CD4-positive, alpha-beta memory T cell (primary cell): ENCODE measurements at regions of chr12 and their contacts with region 1.

Region 1: DNA sequence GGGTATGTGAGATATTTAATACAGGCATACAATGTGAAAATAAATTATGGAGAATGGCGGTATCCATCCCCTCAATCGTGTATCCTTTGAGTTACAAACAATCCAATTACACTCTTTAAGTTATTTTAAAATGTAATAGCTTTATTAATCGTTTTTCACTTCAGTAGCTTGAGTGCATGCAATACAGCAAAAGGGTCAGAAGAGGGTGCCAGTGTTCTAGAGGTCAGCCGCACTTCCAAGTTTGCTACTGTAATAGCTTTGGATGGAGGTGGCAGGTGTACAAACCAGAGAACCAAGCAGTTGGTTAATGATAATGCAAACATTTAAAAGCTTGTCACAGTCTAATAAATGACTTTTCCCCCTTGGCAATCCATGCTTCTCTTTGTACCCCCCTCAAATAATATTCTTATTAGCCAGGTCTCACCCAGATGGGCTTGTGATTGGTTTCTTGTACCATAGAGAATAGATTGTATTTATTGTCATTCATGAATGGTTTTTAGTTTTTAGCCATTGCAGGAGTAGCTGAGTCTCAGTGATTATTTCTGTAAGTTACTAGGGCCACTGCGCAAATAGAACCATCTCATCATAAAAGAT is 127.0 kb downstream of the ERC1 start:
- DNase-seq: peak; percentile 66 to 72 (median 68)
- H3K4me3 ChIP-seq: no peak overlapping the region
- H3K4me3 Mint-ChIP-seq: no peak overlapping the region
- H3K27ac ChIP-seq: no peak overlapping the region
- H3K27ac Mint-ChIP-seq: no peak overlapping the region
- H3K4me1 ChIP-seq: peaks cover 8% of the 10 kb centered on the region
- H3K4me1 Mint-ChIP-seq: peaks cover 5 to 18% (median 10%) of the 10 kb centered on the region in 4 donors
- H3K27me3 ChIP-seq: no peaks in the 10 kb centered on the region
- H3K27me3 Mint-ChIP-seq: no peaks in the 10 kb centered on the region

Region 2: GRCh38 chr12:751999-752694 is 365.9 kb before region 1 on chr12 and contains the start of gene WNK1:
- CTCF ChIA-PET with region 1: no interaction called
- POLR2A ChIA-PET with region 1: no interaction called
- intact Hi-C with region 1: no loop called
- DNase-seq: peak; percentile 96 to 98 (median 96)
- H3K4me3 ChIP-seq: peak within 1 kb of the TSS; percentile 90 to 96
- H3K4me3 Mint-ChIP-seq: peak within 1 kb of the TSS; percentile 86 to 98 (median 94)
- H3K27ac ChIP-seq: peak within 1 kb of the TSS; percentile 89
- H3K27ac Mint-ChIP-seq: peak within 1 kb of the TSS; percentile 80 to 98 (median 93)
- H3K4me1 ChIP-seq: peaks cover 40% of the 10 kb centered on the region
- H3K4me1 Mint-ChIP-seq: peaks cover 8 to 21% (median 19%) of the 10 kb centered on the region in 4 donors
- H3K27me3 ChIP-seq: no peaks in the 10 kb centered on the region
- H3K27me3 Mint-ChIP-seq: no peaks in the 10 kb centered on the region
- total RNA-seq, gene WNK1: 192 to 194 TPM

Region 3: DNA sequence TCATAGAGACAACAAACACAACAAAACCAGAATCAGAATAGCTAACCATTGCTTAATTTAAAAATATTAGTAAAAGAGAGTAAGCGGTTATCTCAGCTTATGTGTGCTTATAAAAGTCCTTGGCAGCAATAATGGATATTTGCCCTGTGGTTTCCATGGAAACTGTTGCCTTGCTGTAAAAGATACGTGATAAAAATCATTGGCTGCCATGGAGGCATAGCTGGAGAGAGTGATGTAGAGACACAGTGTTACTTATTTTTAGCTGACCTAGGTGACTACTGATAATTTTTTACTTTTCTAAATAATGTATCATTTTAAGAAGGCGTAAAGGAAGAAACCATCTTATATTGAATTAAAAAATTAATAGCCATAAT is 34.2 kb before region 1 on chr12:
- CTCF ChIA-PET with region 1: no interaction called
- POLR2A ChIA-PET with region 1: no interaction called
- intact Hi-C with region 1: no loop called
- DNase-seq: no peak
- H3K4me3 ChIP-seq: no peak overlapping the region
- H3K4me3 Mint-ChIP-seq: no peak overlapping the region
- H3K27ac ChIP-seq: no peak overlapping the region
- H3K27ac Mint-ChIP-seq: peak overlapping the region in 3 of 7 donors; percentile 43 to 74 (median 47)
- H3K4me1 ChIP-seq: no peaks in the 10 kb centered on the region
- H3K4me1 Mint-ChIP-seq: peaks cover 0 to 3% (median under 1%) of the 10 kb centered on the region in 4 donors
- H3K27me3 ChIP-seq: no peaks in the 10 kb centered on the region
- H3K27me3 Mint-ChIP-seq: no peaks in the 10 kb centered on the region

Region 4: GRCh38 chr12:1138691-1139090 is 20.6 kb after region 1 on chr12:
- CTCF ChIA-PET with region 1: interaction called, 19 read pairs
- POLR2A ChIA-PET with region 1: no interaction called
- intact Hi-C with region 1: no loop called
- DNase-seq: no peak
- H3K4me3 ChIP-seq: no peak overlapping the region
- H3K4me3 Mint-ChIP-seq: no peak overlapping the region
- H3K27ac ChIP-seq: no peak overlapping the region
- H3K27ac Mint-ChIP-seq: peak overlapping the region in 1 of 7 donors; percentile 64
- H3K4me1 ChIP-seq: no peaks in the 10 kb centered on the region
- H3K4me1 Mint-ChIP-seq: peaks cover 0 to 3% (median 1%) of the 10 kb centered on the region in 4 donors
- H3K27me3 ChIP-seq: no peaks in the 10 kb centered on the region
- H3K27me3 Mint-ChIP-seq: no peaks in the 10 kb centered on the region

Region 5: DNA sequence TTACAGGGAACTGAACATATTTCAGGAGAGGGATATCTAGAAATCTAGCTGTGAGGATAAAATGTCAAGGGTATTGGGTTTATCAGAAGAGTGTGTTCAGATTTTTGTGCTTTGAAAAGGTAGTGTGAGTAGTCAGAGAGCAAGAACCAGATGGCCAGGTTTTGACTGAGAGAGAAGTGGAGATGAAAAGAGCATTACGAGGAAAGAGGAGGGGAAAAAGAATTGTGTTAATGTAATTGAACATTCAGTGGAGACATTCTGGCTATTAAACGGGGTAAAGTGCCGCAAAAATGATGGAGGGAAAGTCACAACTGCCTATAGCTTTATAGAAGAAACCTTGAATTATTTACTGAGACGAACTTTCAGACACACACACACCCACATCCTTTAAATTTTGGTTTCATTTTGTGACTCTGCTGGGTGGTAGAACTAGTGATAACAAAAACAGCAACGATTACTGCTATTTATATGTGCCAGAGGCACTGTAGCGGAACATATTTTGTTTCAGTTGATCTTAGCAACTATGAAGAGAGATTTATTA is 86.6 kb after region 1 on chr12:
- CTCF ChIA-PET with region 1: interaction called, 10 read pairs
- POLR2A ChIA-PET with region 1: interaction called, 3 read pairs
- intact Hi-C with region 1: no loop called
- DNase-seq: peak in 4 of 5 donors; percentile 23 to 45 (median 39)
- H3K4me3 ChIP-seq: peak overlapping the region; percentile 31 to 55
- H3K4me3 Mint-ChIP-seq: no peak overlapping the region
- H3K27ac ChIP-seq: peak overlapping the region; percentile 42
- H3K27ac Mint-ChIP-seq: no peak overlapping the region
- H3K4me1 ChIP-seq: peaks cover 19% of the 10 kb centered on the region
- H3K4me1 Mint-ChIP-seq: peaks cover 5 to 9% (median 8%) of the 10 kb centered on the region in 4 donors
- H3K27me3 ChIP-seq: no peaks in the 10 kb centered on the region
- H3K27me3 Mint-ChIP-seq: no peaks in the 10 kb centered on the region

Region 6: GRCh38 chr12:1544996-1545700 is 427.1 kb after region 1 on chr12:
- CTCF ChIA-PET with region 1: interaction called, 21 read pairs
- POLR2A ChIA-PET with region 1: no interaction called
- intact Hi-C with region 1: no loop called
- DNase-seq: no peak
- H3K4me3 ChIP-seq: no peak overlapping the region
- H3K4me3 Mint-ChIP-seq: no peak overlapping the region
- H3K27ac ChIP-seq: no peak overlapping the region
- H3K27ac Mint-ChIP-seq: no peak overlapping the region
- H3K4me1 ChIP-seq: no peaks in the 10 kb centered on the region
- H3K4me1 Mint-ChIP-seq: no peaks in the 10 kb centered on the region
- H3K27me3 ChIP-seq: no peaks in the 10 kb centered on the region
- H3K27me3 Mint-ChIP-seq: peaks cover 22 to 24% of the 10 kb centered on the region in 2 donors

Region 7: GRCh38 chr12:1605129-1606020 is 487.3 kb after region 1 on chr12:
- CTCF ChIA-PET with region 1: interaction called, 124 read pairs
- POLR2A ChIA-PET with region 1: interaction called, 15 read pairs
- intact Hi-C with region 1: loop called (anchors 1 kb)
- DNase-seq: peak; percentile 65 to 73 (median 70)
- H3K4me3 ChIP-seq: peak overlapping the region in 1 of 2 donors; percentile 49
- H3K4me3 Mint-ChIP-seq: peak overlapping the region; percentile 82 to 92 (median 86)
- H3K27ac ChIP-seq: no peak overlapping the region
- H3K27ac Mint-ChIP-seq: peak overlapping the region in 5 of 7 donors; percentile 51 to 87 (median 66)
- H3K4me1 ChIP-seq: peaks cover 27% of the 10 kb centered on the region
- H3K4me1 Mint-ChIP-seq: peaks cover 17 to 41% (median 28%) of the 10 kb centered on the region in 4 donors
- H3K27me3 ChIP-seq: no peaks in the 10 kb centered on the region
- H3K27me3 Mint-ChIP-seq: no peaks in the 10 kb centered on the region